ENCODE measurements at regions of chr14 and their contacts with region 1.

Region 1: DNA sequence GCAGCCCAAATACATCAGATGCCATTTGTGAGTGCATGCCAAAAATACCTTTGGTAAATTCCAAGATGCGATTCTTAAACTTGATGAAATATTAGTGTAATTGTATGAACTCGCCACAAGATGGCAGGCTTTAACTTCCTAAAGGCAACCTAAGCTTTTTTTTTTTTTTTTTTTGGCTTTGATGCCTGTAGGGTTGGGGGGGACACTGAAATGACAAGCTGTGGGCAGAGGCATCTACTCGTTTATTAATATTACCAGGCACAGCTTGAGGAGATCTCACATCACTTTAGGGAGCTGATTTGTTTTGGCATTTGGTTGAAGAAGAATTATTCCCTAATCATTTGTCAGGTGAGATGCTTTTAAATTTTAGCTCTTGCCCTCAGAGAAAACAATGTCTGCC is 126.7 kb upstream of the CCDC196 start:
- DNase-seq: no peak
- H3K4me3 ChIP-seq: no peak overlapping the region
- CTCF ChIP-seq: peak; percentile 30

Region 2: DNA sequence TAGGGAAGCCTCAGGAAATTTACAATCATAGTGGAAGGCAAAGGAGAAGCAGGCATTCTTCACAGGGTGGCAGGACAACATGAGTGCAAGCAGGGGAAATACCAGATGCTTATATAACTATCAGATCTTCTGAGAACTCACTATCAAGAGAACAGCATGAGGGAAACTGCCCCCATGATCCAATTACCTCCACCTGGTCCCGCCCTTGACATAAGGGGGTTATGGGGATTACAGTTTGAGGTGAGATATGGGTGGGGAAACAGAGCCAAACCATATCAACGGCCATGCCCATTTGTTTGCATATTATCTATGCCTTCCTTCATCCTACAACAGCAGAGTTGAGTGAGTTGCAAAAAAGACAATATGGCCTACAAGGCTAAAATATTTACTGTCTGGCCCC is 13.5 kb before region 1 on chr14:
- CTCF ChIA-PET with region 1: interaction called, 10 read pairs
- POLR2A ChIA-PET with region 1: no interaction called
- DNase-seq: no peak
- H3K4me3 ChIP-seq: no peak overlapping the region
- CTCF ChIP-seq: no peak

Region 3: DNA sequence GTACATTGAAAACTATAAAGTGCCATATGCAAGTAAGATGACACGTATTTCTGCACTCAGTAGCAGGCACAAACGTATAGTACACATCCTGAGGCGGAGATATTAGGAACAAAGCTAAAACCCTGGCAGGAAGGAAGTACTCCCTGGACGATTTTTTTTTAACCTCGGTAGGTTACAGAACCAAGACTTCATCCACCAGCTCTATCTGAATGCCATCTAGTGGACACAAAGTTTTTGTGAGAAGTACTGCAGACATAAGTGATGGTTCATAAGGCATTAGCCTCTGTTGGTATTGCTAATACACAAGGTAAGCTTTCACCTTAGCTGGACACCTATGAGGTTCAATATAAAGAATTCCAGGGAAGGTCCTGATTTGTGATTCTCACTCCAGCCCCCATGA is 43.7 kb after region 1 on chr14:
- CTCF ChIA-PET with region 1: interaction called, 73 read pairs
- POLR2A ChIA-PET with region 1: no interaction called
- DNase-seq: peak; percentile 14
- H3K4me3 ChIP-seq: no peak overlapping the region
- CTCF ChIP-seq: peak; percentile 33

Region 4: DNA sequence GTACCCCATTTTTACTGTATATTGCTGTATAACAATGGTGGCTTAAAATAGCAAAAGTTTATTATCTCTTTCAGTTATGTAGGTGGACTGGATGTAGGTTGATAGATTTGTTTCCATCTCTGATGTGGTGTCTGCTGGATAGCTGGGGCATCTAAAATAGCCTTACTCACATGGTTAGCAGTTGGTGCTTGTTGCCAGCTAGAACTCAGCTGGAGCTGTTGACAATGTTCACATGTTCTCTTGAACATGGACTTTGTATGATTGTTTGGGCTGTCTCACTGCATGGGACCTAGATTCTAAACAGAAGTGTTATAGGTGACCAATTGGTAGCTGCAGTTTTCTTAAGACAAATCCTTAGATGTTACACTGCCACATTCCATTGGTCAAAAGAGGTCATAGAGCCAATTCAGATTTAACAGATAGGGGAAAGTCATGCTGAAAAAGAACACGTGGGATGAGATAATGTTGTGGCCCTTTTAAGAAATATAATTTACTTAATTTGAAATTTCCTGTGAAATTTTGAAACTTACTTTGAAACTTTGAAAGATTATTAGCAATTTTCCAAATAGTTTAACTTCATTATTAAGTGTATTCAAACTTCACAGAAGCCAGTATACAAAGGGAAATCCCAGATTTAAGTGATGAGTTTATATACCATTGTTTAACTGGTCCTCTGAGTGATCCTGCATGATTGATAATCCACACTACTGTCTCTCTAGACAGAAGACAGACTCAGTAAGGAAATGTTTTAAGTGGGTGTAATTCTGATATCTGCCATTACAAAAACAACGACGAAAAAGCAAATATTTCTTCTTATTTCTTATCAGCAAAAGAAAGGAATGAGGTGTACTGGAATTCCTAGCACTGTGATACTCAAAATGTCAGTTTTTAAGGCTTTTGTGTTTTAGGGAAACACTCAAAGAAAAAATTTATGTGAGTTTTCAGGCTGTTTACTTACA is 275.7 kb after region 1 on chr14:
- CTCF ChIA-PET with region 1: no interaction called
- POLR2A ChIA-PET with region 1: no interaction called
- DNase-seq: no peak
- H3K4me3 ChIP-seq: no peak overlapping the region
- CTCF ChIP-seq: no peak

Measured in AG04449 (cell line).